ENCODE measurements at regions of chr12 and their contacts with region 1.

Region 1: DNA sequence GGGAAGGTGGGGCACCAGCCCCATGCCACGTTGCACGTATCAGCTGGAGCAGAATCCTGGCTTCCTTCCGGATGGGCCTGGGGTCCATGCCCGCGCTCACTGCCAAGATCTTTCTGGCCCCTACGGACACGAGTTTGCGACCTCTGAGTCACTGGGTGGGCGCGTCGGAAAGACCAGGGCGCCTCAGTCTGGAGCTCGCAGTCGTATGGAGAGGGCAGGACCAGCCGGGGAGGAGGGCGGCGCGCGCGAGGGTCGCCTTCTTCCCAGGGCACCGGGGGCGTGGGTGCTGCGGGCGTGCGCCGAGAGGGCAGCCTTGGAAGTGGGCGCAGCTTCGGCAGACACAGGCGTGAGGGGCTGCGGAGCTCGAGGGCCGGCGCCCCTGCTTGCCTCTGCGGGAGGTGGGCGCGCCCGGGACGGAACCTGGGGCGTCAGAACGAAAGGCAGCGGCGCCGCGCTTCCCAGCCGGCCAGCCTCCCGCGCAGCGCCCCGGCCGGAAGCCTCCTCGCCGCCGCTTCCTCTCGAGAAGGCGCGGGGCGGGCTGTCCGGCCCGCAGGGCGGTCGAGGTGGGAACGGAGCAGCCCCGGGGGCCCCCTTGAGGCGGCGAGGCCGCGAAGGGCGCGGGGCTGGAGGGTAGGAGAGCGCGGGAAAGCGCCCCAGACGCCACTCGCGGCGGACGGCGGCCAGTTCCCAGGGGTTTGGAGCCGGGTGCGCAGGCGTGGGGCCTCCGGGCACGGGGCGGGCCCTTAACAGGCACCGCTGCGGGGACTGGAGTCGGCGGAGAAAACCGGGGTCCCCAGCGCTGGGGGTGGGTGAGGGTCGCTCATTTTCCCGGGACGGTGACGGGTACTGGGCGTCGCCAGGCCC is at the start of gene ARL6IP4:
- DNase-seq: peak; percentile 73

Region 2: GRCh38 chr12:122956035-122956434 is 24.4 kb before region 1 on chr12:
- CTCF ChIA-PET with region 1: no interaction called
- POLR2A ChIA-PET with region 1: no interaction called
- DNase-seq: no peak

Region 3: GRCh38 chr12:122965851-122966722 is 14.3 kb before region 1 on chr12 and contains the start of gene ABCB9:
- CTCF ChIA-PET with region 1: no interaction called
- POLR2A ChIA-PET with region 1: interaction called, 17 read pairs
- DNase-seq: peak; percentile 99

Region 4: DNA sequence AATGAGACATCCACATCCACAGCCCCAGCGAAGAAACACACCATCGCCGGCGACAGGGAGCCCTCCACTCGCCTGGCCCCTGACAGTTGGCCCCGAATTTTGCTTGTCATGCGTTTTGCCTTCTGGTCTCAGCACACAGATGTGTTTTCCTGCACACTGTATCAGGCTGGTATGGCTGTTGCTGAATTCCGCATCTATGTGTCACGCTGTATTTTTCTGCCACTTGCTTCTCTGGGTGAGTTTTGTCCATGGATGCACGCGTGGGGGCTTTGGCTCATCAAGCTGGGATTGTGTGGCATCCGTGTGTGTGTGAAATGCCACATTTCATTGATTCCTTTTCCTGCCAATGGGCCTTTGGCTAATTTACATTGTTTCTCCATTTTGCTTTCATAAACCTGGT is 26.6 kb after region 1 on chr12:
- CTCF ChIA-PET with region 1: no interaction called
- POLR2A ChIA-PET with region 1: no interaction called
- DNase-seq: no peak